Activated naive CD4-positive, alpha-beta T cell treated with anti-CD3 and anti-CD28 coated beads for 36 hours (primary cell): ENCODE measurements at regions of chr1 and their contacts with region 1.

Region 1: GRCh38 chr1:66331657-66332547 is 202.1 kb upstream of the SGIP1 start:
- DNase-seq: peak; percentile 76
- H3K4me3 Mint-ChIP-seq: peak overlapping the region; percentile 98
- H3K27ac Mint-ChIP-seq: peak overlapping the region; percentile 95
- H3K4me1 Mint-ChIP-seq: peaks cover 42% of the 10 kb centered on the region
- H3K27me3 Mint-ChIP-seq: no peaks in the 10 kb centered on the region

Region 2: GRCh38 chr1:64956733-64957441 is 1375.0 kb before region 1 on chr1:
- CTCF ChIA-PET with region 1: no interaction called
- intact Hi-C with region 1: loop called (anchors 5 kb)
- DNase-seq: peak; percentile 79
- H3K4me3 Mint-ChIP-seq: no peak overlapping the region
- H3K27ac Mint-ChIP-seq: no peak overlapping the region
- H3K4me1 Mint-ChIP-seq: peaks cover 63% of the 10 kb centered on the region
- H3K27me3 Mint-ChIP-seq: no peaks in the 10 kb centered on the region

Region 3: DNA sequence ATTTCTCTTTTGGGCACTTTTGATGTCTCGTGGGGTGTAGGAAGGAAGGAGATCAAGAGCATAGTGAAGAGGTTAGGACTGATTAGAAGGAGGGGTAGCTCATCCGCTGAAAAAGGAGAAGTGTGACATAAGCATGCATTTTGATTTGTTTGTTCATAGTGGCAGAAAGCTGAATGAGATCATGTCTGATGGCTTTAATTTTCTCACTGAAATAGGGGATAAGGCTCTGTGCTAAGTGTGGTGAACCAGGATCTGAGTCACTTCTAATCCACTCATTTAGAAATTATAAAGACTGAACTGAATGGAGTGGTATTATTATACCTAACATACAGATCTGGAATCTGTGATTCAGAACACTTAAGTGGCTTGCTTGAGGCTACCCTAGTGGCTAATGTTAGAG is 194.7 kb before region 1 on chr1:
- CTCF ChIA-PET with region 1: no interaction called
- intact Hi-C with region 1: loop called (anchors 5 kb)
- DNase-seq: no peak
- H3K4me3 Mint-ChIP-seq: no peak overlapping the region
- H3K27ac Mint-ChIP-seq: no peak overlapping the region
- H3K4me1 Mint-ChIP-seq: peaks cover 8% of the 10 kb centered on the region
- H3K27me3 Mint-ChIP-seq: no peaks in the 10 kb centered on the region

Region 4: DNA sequence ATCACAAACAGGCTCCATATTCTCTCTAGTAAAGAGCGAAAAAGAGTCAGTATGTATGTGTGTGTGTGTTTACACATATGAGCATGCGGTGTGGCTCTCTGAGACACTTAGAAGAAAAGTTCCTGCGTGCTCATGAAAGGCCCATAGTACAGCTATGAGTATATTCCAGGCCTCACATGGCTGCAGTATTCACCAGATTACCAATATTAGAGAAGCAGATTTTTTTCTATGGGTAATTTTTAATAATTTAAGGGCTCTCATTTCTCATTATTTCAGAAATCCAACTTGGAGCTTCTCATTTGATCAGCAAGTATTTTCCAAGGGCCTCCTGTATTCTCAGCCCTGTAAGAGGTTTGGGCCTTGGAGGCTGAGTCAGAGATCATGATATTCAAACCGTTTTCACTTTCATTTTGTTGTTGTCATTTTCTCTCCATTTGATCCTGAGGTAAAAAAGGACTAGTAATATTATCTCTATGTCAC is 30.9 kb before region 1 on chr1:
- CTCF ChIA-PET with region 1: interaction called, 4 read pairs
- intact Hi-C with region 1: loop called (anchors 1 kb)
- DNase-seq: peak; percentile 54
- H3K4me3 Mint-ChIP-seq: peak overlapping the region; percentile 40
- H3K27ac Mint-ChIP-seq: peak overlapping the region; percentile 69
- H3K4me1 Mint-ChIP-seq: peaks cover 38% of the 10 kb centered on the region
- H3K27me3 Mint-ChIP-seq: no peaks in the 10 kb centered on the region

Region 5: DNA sequence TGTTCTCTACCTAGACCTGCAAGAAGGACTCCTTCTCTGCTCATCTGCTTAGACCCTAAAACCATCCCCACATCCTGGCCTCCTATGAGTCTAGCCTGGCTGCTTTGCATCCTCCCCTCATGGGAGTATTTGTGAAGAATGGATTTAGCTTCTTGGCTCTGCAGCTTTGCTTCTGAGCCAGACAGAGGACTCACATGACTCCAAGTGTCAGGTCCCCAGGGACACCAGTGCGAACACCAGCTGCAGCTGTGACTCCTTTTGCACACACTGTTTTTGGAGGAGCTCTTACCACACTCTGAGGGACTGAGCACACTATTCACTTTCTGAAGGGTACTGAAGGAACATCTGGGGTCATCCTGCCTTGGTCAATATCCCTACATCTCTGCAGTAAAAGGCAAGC is 70.3 kb after region 1 on chr1:
- CTCF ChIA-PET with region 1: no interaction called
- intact Hi-C with region 1: loop called (anchors 1 kb)
- DNase-seq: no peak
- H3K4me3 Mint-ChIP-seq: no peak overlapping the region
- H3K27ac Mint-ChIP-seq: no peak overlapping the region
- H3K4me1 Mint-ChIP-seq: peaks cover 32% of the 10 kb centered on the region
- H3K27me3 Mint-ChIP-seq: no peaks in the 10 kb centered on the region

Region 6: DNA sequence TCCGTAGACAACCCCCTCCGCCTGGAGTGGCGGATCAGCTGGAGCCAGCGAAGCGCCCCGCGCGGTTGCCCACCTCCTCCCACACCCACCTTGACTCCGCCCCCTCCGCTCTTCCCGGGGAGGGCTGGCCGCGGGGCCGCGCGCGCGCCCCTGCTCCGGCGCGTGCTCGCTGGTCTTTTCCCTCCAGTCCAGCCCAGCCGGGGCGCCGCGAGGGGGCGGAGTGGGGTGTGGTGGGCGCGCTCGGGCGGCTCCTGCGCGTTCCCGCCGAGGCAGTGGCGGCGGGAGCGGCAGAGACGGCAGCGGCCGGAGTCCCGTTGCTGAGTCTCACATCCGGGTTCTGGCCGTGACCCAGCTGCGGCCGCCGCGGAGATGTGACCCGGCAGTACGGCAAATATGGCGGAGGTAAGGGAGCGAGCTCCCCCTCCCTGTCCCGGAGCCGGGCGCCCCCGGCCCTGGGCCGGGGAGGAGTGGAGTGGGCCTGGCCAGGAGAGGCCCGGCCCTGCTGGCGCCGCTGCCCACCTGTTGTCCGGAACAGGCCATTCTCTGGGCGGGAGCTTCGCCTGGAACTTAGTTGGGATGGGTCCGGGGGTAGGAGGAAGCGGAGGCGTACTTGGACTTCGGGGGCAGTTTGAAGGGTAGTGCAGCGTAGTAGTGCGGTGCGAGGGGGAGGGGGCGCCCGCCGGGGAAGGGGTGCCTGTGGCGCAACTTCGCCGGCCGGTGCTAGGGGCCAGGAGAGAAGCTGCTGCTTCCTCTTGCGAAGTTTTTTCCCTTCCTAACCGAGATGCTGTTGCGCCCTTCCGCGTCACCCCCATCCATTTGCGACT is 598.3 kb after region 1 on chr1:
- CTCF ChIA-PET with region 1: no interaction called
- intact Hi-C with region 1: loop called (anchors 5 kb)
- DNase-seq: peak; percentile 92
- H3K4me3 Mint-ChIP-seq: peak overlapping the region; percentile 84
- H3K27ac Mint-ChIP-seq: peak overlapping the region; percentile 92
- H3K4me1 Mint-ChIP-seq: peaks cover 51% of the 10 kb centered on the region
- H3K27me3 Mint-ChIP-seq: no peaks in the 10 kb centered on the region

Region 7: DNA sequence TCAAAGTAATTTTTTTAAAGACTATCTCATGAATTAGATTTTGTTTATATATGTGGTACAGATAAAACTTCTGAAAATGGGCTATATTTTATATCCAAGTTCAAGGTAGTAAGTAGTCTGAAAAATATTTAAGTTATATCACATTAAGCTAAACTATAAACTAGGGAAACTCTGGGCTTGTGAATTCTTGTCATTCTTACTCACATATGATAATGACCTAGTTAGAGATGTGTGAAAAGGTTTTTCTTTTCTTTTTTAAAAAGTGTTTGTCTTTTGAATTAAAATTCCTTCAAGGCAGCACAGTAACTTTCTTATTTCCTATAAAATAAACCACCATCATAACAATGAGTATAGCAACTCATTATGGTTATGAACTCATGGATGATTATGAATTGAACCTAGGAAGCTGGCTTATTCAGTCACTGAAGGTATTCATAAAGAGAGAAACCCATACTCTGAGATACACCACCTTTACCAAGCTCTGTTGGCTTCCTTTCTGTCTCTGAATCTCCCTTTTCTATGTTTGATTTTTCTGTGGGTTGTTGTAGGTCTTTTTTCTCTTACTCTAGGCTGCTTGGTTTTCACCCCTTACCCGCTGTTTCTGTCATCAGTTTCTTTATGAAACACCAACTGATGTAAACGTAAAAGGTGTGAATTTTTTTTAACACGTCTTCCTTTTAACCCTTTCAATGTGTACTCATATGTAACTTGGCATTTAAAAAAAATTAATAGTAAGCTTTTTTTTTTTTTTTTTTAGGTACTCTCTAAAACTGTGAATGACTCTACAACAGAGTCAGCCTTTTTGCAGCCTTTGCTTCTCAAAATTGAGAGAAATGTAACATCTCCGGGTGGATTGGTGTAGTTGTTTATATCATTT is 1001.0 kb after region 1 on chr1:
- CTCF ChIA-PET with region 1: no interaction called
- intact Hi-C with region 1: loop called (anchors 2 kb)
- DNase-seq: peak; percentile 67
- H3K4me3 Mint-ChIP-seq: no peak overlapping the region
- H3K27ac Mint-ChIP-seq: peak overlapping the region; percentile 97
- H3K4me1 Mint-ChIP-seq: peaks cover 79% of the 10 kb centered on the region
- H3K27me3 Mint-ChIP-seq: no peaks in the 10 kb centered on the region